ENCODE measurements at regions of chr7 and their contacts with region 1.

Region 1: DNA sequence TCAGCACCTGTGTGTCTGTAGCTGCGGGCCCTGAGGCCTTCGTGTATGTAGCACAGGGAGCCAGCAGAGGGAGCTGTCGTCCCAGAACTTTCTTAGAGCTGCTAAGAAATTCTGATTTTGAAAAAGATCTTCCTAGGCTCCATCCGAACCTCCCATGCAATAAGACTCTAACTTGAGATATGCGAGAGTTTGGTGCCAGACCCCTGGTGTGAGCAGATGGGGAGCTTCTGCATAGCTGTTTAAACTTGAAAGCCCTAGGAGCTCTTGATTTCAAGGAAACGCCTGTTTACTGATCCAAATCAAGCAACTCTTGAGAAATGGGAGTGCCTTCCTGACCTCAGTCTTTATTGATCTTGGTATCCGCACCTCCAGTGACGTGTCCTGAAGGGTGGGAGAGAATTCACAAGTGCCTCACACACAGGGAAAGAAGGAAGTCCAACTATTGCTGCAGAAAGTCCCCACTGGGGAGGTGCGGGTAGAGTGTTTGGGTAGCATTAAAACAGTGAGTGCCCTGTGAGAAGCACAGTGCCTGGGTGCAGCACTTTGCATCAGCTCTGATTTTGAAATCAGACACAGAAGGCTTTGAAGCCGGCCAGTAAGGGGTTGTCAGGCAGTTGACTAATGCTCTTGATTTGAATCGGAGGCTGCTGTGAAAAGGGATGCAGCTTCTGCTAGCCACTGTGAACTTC is 66.4 kb upstream of the STRIP2 start:
- DNase-seq: peak; percentile 75
- CTCF ChIP-seq: peak; percentile 93

Region 2: GRCh38 chr7:129332284-129333035 is 35.4 kb before region 1 on chr7:
- CTCF ChIA-PET with region 1: interaction called, 10 read pairs
- POLR2A ChIA-PET with region 1: no interaction called
- DNase-seq: no peak
- CTCF ChIP-seq: no peak

Region 3: GRCh38 chr7:129389829-129390228 is 22.0 kb after region 1 on chr7:
- CTCF ChIA-PET with region 1: interaction called, 58 read pairs
- POLR2A ChIA-PET with region 1: no interaction called
- DNase-seq: no peak
- CTCF ChIP-seq: no peak

Region 4: GRCh38 chr7:129433847-129434674 is 66.2 kb after region 1 on chr7 and contains the start of gene STRIP2:
- CTCF ChIA-PET with region 1: interaction called, 17 read pairs
- POLR2A ChIA-PET with region 1: no interaction called
- DNase-seq: peak; percentile 94
- CTCF ChIP-seq: no peak

Region 5: DNA sequence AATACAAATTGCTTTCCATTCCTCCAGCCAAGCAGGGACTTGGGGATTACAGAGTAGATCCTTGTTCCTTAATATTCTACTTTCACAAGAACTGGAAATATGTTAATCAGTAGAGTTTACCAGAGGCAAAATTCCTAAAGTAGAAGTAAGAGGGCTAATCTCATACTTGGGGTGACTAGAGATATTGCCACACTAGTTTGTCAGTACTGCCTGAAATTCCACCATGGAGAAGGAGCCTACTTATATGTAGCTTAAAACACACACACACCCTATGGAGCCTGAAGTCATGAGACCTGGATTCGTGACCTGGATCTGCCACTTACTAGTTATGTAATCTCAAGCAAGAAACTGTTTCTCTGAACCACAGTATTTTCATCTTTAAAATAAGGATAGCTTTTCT is 100.2 kb after region 1 on chr7:
- CTCF ChIA-PET with region 1: interaction called, 120 read pairs
- POLR2A ChIA-PET with region 1: interaction called, 3 read pairs
- DNase-seq: no peak
- CTCF ChIP-seq: no peak

Region 6: GRCh38 chr7:129825496-129826267 is 457.8 kb after region 1 on chr7:
- CTCF ChIA-PET with region 1: interaction called, 14 read pairs
- POLR2A ChIA-PET with region 1: no interaction called
- DNase-seq: peak; percentile 91
- CTCF ChIP-seq: peak; percentile 66

Measured in GM10248 (cell line).